Heart left ventricle (tissue), 16 donors: ENCODE measurements at regions of chr9 and their contacts with region 1.

Region 1: DNA sequence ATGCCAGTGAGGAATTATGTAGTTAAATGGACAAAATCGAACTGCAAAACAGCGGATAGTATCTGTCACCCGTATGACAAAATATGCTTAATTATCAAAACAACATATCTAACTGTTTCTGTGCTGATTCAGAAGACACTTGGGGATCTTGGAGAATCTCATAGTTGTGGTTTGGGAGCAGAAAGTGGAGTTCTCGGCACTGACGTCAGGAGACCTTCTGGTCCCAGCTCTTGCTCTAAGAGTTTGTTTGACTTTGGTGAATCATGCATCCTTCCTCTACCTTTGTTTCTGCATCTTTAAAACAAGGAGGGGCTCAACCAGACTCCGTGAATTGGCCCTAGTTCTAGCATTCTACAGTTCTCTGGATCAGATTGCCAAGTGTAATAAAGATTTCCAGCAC is 37.0 kb upstream of the TAF1L start:
- DNase-seq: no peak
- ATAC-seq: no peak
- H3K4me3 ChIP-seq: no peak overlapping the region
- H3K27ac ChIP-seq: no peak overlapping the region
- H3K4me1 ChIP-seq: no peaks in the 10 kb centered on the region
- H3K27me3 ChIP-seq: no peaks in the 10 kb centered on the region
- CTCF ChIP-seq: no peak
- POLR2A ChIP-seq: no peak

Region 2: DNA sequence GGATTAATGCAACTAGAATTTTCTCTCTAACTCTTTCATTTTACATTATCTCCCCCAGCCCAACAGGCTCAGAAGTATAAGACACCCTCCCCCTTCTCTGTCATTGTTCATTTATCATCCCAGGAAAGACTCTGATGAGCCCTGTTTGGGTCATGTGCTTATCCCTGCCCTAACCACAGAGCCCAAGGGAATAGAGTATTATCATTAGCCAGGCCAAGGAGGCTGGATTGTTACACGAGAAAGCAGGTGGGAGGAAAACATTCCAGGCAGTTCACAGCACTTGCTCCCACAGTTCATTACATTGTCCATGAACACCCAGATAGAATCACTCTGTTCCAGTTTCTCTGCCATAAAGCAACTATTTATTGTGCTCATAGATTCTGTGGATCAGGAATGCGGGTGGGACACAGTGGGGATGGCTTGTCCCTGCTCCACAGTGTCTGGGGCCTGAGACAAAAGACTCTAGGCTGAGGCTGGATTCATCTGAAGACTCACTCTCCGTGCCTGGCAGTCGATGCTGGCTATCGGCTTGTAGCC is 51.4 kb after region 1 on chr9:
- intact Hi-C with region 1: loop called in 1 of 10 experiments (anchors 5 kb)
- DNase-seq: no peak
- ATAC-seq: no peak
- H3K4me3 ChIP-seq: no peak overlapping the region
- H3K27ac ChIP-seq: no peak overlapping the region
- H3K4me1 ChIP-seq: no peaks in the 10 kb centered on the region
- H3K27me3 ChIP-seq: no peaks in the 10 kb centered on the region
- CTCF ChIP-seq: no peak
- POLR2A ChIP-seq: no peak